Gastrocnemius medialis (tissue), 4 donors: ENCODE measurements at regions of chr9 and their contacts with region 1.

Region 1: GRCh38 chr9:6667633-6668280 is 22.2 kb upstream of the GLDC start:
- DNase-seq: no peak
- ATAC-seq: peak in 1 of 2 donors; percentile 56
- H3K4me3 ChIP-seq: no peak overlapping the region
- H3K27ac ChIP-seq: no peak overlapping the region
- H3K4me1 ChIP-seq: no peaks in the 10 kb centered on the region
- H3K27me3 ChIP-seq: no peaks in the 10 kb centered on the region
- CTCF ChIP-seq: peak in 4 of 5 experiments; percentile 26 to 59 (median 38)
- POLR2A ChIP-seq: no peak

Region 2: DNA sequence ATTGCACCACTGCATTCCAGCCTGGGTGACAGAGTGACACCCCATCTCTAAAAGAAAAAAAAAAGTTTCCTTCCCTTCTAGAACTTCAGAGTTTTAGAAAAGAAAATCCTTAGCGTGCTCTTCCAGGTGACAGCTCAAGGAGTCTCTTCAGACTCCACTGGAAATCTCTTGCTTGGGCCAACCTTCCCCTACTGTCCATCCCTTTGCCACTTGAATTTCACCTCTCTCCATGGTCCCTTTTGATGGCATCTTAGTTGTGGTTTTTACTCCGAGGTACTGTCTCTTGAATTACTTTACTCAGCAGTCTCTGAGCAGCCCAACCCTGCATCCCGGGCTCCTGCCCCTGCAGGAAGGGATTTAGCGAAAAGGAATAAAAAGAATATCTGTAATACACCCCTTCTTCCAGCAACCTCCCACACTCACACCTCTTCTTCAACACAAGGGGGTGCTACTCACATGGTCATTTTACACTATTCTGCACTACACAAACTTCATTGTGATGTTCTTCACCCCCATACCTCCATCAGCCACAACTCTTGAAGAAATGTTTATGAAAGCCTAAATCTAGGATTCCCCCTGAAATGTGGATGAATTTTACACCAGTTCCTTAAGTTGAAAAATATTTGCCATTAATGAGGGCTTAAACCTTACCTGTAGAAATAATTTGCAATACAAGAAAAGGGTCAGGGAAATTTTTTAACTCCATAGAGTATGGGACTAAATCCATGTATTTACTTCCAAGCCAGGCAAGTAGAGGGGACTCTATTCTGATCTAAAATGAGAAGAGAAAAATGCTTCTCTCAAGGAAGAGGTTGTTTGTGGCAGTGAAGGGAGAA is 313.7 kb before region 1 on chr9:
- in situ Hi-C with region 1: no loop called
- intact Hi-C with region 1: loop called (anchors 5 kb)
- DNase-seq: no peak
- ATAC-seq: peak; percentile 63 to 68
- H3K4me3 ChIP-seq: no peak overlapping the region
- H3K27ac ChIP-seq: no peak overlapping the region
- H3K4me1 ChIP-seq: no peaks in the 10 kb centered on the region
- H3K27me3 ChIP-seq: no peaks in the 10 kb centered on the region
- CTCF ChIP-seq: peak; percentile 51 to 74 (median 60)
- POLR2A ChIP-seq: no peak

Region 3: GRCh38 chr9:6412487-6413364 is 255.0 kb before region 1 on chr9 and contains the start of gene UHRF2:
- in situ Hi-C with region 1: no loop called
- intact Hi-C with region 1: no loop called
- DNase-seq: peak; percentile 96 to 98
- ATAC-seq: peak; percentile 95 to 96
- H3K4me3 ChIP-seq: peak within 1 kb of the TSS; percentile 80 to 86 (median 84)
- H3K27ac ChIP-seq: peak within 1 kb of the TSS; percentile 80 to 86 (median 83)
- H3K4me1 ChIP-seq: peaks cover 18 to 21% of the 10 kb centered on the region in 2 donors
- H3K27me3 ChIP-seq: no peaks in the 10 kb centered on the region
- CTCF ChIP-seq: peak in 1 of 5 experiments; percentile 15
- POLR2A ChIP-seq: peak; percentile 62 to 89
- total RNA-seq, gene UHRF2: 16.7 to 29.0 (median 18.8) TPM